Activated naive CD4-positive, alpha-beta T cell treated with anti-CD3 and anti-CD28 coated beads for 36 hours (primary cell): ENCODE measurements at regions of chr12 and their contacts with region 1.

Region 1: DNA sequence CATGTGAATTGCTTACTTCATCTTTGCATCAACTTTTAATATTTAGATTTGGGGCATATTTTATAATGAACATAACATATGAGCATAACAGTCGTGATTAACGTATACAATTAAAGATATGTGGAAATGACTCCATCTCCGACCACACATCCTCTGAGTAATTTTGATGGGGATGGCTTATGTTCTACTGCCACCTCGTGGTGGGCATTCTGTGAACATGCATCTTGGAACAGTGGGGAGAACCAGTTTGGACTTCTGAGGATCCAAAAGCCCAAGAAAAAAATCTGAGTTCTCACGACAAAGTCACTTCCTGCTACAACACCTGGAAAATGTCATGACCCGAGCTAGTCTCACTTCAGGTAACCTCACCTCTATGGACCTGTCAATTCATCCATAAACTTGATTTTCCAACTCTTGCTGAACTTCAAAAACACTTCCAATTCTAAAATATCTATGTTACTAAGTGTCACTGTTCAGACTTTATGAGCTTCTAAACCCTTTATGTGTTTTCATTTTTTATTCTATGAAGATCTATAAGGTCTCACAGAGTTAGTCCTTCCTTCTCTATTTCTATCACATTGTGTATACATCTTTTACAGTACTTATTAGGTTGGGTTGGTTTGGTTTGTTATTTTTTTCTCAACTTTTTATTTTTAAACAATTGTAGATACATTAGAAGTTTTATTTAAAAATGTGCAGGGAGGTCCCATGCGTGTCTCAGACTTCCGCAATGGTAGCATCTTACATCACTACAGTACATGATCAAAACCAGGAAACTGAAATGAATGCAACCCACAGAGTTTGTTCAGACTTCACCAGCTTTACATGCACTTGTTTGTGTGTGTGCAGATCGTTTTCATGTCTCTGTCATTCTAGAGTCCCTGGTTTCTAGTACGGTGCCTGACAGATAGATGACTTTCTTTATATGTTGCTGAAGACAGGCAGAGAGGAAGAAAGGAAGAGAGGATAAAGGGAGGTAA is 38.2 kb upstream of the STAB2 start:
- DNase-seq: peak; percentile 86
- H3K4me3 Mint-ChIP-seq: no peak overlapping the region
- H3K27ac Mint-ChIP-seq: no peak overlapping the region
- H3K4me1 Mint-ChIP-seq: peaks cover 2% of the 10 kb centered on the region
- H3K27me3 Mint-ChIP-seq: peaks cover 23% of the 10 kb centered on the region

Region 2: DNA sequence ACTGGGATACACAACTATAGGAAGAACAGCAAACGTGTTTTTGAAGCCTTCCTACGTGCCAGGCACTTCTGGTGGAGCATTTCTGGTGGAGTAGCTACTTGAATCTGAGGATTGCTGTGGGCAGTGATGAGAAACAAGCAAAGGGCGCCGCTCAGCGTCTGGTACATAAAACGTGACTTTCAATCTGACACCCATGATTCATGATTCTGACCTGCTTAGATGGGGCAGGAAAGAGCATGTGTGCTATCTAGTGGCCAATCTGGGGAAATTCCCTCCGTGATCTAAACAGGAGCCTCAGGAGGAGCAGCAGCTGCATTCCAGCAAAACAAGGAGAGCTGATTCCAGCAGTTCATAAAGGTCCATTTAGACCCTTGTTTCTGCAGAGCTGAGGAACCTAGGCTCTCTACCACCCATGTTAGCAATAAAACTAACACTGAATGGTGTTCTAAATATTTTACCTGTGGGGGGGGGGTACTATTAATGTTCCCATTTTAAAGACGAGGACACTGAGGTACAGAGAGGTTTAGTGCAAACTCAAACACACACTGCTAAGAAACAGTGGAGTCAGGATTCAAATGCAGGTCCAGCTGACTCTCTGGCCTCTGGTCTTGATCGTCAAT is 669.7 kb before region 1 on chr12:
- CTCF ChIA-PET with region 1: interaction called, 23 read pairs
- intact Hi-C with region 1: loop called (anchors 1 kb)
- DNase-seq: peak; percentile 51
- H3K4me3 Mint-ChIP-seq: no peak overlapping the region
- H3K27ac Mint-ChIP-seq: no peak overlapping the region
- H3K4me1 Mint-ChIP-seq: no peaks in the 10 kb centered on the region
- H3K27me3 Mint-ChIP-seq: peaks cover 13% of the 10 kb centered on the region

Region 3: DNA sequence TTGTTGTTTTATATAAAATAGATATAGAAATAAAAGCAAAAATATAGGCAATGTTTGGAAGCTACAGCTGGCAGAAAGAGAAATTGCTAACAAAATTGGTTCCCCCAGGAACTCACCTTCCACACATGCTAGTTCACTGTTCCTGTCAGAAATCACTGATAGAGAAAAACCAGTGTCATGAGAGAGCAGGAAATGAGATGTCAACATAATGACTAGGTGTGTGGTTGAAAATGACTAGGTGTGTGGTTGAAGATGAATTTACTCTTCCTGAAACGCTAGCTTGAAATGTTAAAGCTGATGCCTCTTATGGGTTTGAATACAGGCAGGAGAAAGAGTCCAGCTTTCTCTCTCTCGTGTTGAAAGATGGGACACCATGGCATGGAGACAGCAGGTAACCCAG is 269.5 kb before region 1 on chr12:
- CTCF ChIA-PET with region 1: no interaction called
- intact Hi-C with region 1: loop called (anchors 5 kb)
- DNase-seq: no peak
- H3K4me3 Mint-ChIP-seq: no peak overlapping the region
- H3K27ac Mint-ChIP-seq: no peak overlapping the region
- H3K4me1 Mint-ChIP-seq: peaks cover 3% of the 10 kb centered on the region
- H3K27me3 Mint-ChIP-seq: peaks cover 2% of the 10 kb centered on the region

Region 4: DNA sequence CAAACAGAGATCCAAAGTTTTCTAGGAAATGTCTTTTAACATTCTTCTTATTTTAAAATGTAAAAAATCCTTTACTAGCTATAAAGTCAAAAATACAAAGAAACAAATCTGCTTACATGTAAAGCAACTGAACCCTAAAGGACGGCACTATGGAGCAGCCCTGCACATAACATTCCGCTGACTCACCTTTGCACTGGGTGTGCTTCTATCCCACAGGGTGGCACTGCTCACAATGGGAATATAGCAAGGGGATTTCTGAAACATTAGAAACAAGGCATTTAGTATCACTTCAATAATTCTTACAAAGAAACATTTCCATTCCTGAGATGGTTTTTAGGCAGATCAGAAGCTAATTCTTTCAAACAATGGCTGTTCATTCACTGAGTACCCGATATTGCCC is 147.5 kb before region 1 on chr12:
- CTCF ChIA-PET with region 1: interaction called, 3 read pairs
- intact Hi-C with region 1: loop called (anchors 1 kb)
- DNase-seq: peak; percentile 15
- H3K4me3 Mint-ChIP-seq: no peak overlapping the region
- H3K27ac Mint-ChIP-seq: no peak overlapping the region
- H3K4me1 Mint-ChIP-seq: no peaks in the 10 kb centered on the region
- H3K27me3 Mint-ChIP-seq: no peaks in the 10 kb centered on the region

Region 5: DNA sequence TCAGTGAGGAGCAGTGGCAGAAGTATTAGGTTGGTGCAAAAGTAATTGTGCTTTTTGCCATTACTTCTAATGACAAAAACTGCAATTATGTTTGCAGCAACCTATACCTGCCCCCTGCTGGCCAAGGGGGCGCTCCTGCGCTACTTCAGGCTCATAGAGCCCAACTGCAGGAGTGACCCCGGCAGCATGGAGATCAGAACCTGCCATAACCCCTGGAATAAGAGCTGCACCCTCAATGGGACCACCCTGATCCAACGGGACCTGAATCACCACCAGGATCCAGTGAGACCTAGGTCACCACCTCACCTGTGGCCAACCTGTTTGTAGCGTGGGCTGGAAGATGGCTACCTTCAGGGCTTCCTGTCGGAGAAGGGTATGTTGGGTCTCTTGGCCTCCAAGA is 44.9 kb before region 1 on chr12:
- CTCF ChIA-PET with region 1: interaction called, 9 read pairs
- intact Hi-C with region 1: loop called (anchors 2 kb)
- DNase-seq: peak; percentile 69
- H3K4me3 Mint-ChIP-seq: no peak overlapping the region
- H3K27ac Mint-ChIP-seq: no peak overlapping the region
- H3K4me1 Mint-ChIP-seq: peaks cover 22% of the 10 kb centered on the region
- H3K27me3 Mint-ChIP-seq: peaks cover 3% of the 10 kb centered on the region

Region 6: DNA sequence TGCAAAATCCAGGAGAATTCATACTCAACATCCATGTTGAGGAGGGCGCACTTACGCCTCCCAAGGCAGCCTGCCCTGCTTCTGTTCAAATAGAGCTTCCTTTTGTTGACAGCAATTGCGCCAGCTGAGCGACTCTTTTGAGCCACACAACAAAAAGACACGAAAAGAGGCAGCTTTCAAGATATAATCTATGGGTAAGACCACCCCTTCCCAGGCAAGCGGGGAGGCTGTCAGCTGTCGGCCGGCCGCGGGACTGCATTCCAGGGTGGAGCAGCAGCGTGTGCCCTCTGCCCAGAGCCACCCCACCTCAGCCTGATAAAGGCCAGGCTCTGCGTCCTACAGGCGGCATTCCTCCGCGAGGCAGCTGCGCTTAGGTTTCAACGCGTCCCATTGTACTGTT is 22.4 kb after region 1 on chr12:
- CTCF ChIA-PET with region 1: interaction called, 10 read pairs
- intact Hi-C with region 1: no loop called
- DNase-seq: no peak
- H3K4me3 Mint-ChIP-seq: no peak overlapping the region
- H3K27ac Mint-ChIP-seq: no peak overlapping the region
- H3K4me1 Mint-ChIP-seq: peaks cover 5% of the 10 kb centered on the region
- H3K27me3 Mint-ChIP-seq: peaks cover 64% of the 10 kb centered on the region